Naive thymus-derived CD4-positive, alpha-beta T cell (primary cell): ENCODE measurements at regions of chr1 and their contacts with region 1.

Region 1: DNA sequence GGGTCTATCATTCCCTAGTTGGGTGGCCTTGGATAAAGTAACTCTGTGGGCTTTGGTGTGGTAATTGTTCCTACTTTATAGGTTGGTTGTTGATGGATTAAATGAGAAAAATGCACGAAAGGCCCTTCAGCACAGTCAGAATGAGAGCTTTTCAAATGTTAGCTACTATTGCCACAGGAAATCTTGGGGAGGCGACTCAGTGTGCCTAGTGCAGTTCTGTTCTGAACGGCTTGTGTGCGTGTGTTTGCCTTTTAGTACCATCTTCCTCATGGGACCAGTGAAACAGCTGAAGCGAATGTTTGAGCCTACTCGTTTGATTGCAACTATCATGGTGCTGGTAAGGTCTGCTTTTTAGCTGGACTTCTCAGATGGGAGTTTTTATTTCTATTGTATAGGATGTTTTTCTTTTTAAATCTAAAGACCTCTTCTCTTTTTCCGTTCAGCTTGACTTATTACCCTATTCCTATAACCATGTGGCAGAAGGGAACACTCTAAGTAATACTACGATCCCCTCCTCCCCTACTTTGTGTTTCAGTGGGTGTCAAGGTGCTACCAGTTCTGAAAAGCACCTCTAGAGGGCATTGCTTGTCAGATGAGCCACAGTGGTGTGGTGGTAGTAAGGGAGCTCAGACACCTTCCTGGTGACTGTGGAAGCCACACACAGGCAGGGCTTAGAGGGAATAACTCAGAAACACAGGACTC is 9.2 kb downstream of the SFT2D2 start:
- DNase-seq: peak in 7 of 9 donors; percentile 17 to 38 (median 27)
- ATAC-seq: peak; percentile 95
- H3K4me3 ChIP-seq: no peak overlapping the region
- H3K4me3 Mint-ChIP-seq: peak overlapping the region in 1 of 10 donors; percentile 26
- H3K27ac ChIP-seq: no peak overlapping the region
- H3K27ac Mint-ChIP-seq: peak overlapping the region in 4 of 9 donors; percentile 1 to 68 (median 34)
- H3K4me1 ChIP-seq: peaks cover 9 to 11% of the 10 kb centered on the region in 2 donors
- H3K4me1 Mint-ChIP-seq: peaks cover 33 to 71% (median 61%) of the 10 kb centered on the region in 7 donors
- H3K27me3 ChIP-seq: no peaks in the 10 kb centered on the region
- H3K27me3 Mint-ChIP-seq: no peaks in the 10 kb centered on the region

Region 2: GRCh38 chr1:168287237-168287664 is 52.3 kb after region 1 on chr1:
- CTCF ChIA-PET with region 1: no interaction called
- POLR2A ChIA-PET with region 1: no interaction called
- intact Hi-C with region 1: loop called in 1 of 2 experiments (anchors 5 kb)
- DNase-seq: no peak
- ATAC-seq: peak; percentile 44
- H3K4me3 ChIP-seq: no peak overlapping the region
- H3K4me3 Mint-ChIP-seq: no peak overlapping the region
- H3K27ac ChIP-seq: no peak overlapping the region
- H3K27ac Mint-ChIP-seq: no peak overlapping the region
- H3K4me1 ChIP-seq: no peaks in the 10 kb centered on the region
- H3K4me1 Mint-ChIP-seq: peaks cover 0 to 23% (median 10%) of the 10 kb centered on the region in 7 donors
- H3K27me3 ChIP-seq: no peaks in the 10 kb centered on the region
- H3K27me3 Mint-ChIP-seq: no peaks in the 10 kb centered on the region

Region 3: GRCh38 chr1:168321945-168322344 is 86.9 kb after region 1 on chr1:
- CTCF ChIA-PET with region 1: interaction called, 3 read pairs
- POLR2A ChIA-PET with region 1: no interaction called
- intact Hi-C with region 1: loop called in 1 of 2 experiments (anchors 2 kb)
- DNase-seq: no peak
- ATAC-seq: no peak
- H3K4me3 ChIP-seq: no peak overlapping the region
- H3K4me3 Mint-ChIP-seq: no peak overlapping the region
- H3K27ac ChIP-seq: no peak overlapping the region
- H3K27ac Mint-ChIP-seq: no peak overlapping the region
- H3K4me1 ChIP-seq: peaks cover 0 to 3% of the 10 kb centered on the region in 2 donors
- H3K4me1 Mint-ChIP-seq: peaks cover 0 to 28% (median 0%) of the 10 kb centered on the region in 7 donors
- H3K27me3 ChIP-seq: no peaks in the 10 kb centered on the region
- H3K27me3 Mint-ChIP-seq: no peaks in the 10 kb centered on the region

Region 4: GRCh38 chr1:168360151-168361021 is 125.4 kb after region 1 on chr1:
- CTCF ChIA-PET with region 1: no interaction called
- POLR2A ChIA-PET with region 1: no interaction called
- intact Hi-C with region 1: loop called in 1 of 2 experiments (anchors 5 kb)
- DNase-seq: peak in 1 of 9 donors; percentile 51
- ATAC-seq: no peak
- H3K4me3 ChIP-seq: no peak overlapping the region
- H3K4me3 Mint-ChIP-seq: peak overlapping the region in 1 of 10 donors; percentile 49
- H3K27ac ChIP-seq: no peak overlapping the region
- H3K27ac Mint-ChIP-seq: peak overlapping the region in 2 of 9 donors; percentile 35 to 70
- H3K4me1 ChIP-seq: peaks cover 4 to 37% of the 10 kb centered on the region in 2 donors
- H3K4me1 Mint-ChIP-seq: peaks cover 8 to 45% (median 10%) of the 10 kb centered on the region in 7 donors
- H3K27me3 ChIP-seq: no peaks in the 10 kb centered on the region
- H3K27me3 Mint-ChIP-seq: peaks cover 0 to 12% (median 5%) of the 10 kb centered on the region in 5 donors

Region 5: DNA sequence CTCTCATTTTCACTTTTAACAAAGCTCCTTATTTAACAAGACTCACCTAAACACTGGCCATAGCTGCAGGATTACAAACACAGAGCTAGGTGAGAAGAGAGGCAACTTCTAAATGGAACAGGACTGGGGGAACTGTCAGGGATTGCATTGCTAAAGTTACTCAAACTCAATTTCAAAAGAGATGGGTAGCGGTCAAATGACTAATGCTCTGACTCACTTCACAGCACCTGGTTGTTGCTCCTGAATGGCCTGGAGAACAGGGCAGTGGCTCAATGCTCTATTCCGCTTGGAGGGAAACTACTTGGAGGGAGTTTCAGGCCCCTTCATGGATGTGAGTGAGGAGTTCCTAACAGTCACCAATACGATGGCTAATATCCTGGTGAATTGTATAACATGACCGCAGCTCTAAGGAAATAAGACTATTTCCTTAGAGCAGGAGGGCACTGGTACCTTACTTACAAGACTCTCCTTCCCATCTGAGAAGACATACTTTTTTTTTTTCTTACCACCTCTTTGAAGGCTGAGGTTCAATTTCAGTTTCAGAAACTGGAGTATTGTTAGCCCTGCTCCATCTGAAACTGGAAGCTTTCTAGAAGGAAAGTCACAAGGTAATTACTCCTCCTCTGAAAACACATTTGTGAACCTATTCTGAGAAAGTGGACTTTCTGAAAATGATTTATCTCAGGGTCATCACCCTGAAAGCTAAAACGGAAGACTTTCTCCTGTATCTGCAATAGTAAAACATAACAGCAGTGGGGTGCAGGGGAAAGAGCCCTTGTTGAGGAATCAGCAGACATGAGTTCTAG is 484.5 kb after region 1 on chr1:
- CTCF ChIA-PET with region 1: no interaction called
- POLR2A ChIA-PET with region 1: no interaction called
- intact Hi-C with region 1: no loop called
- DNase-seq: no peak
- ATAC-seq: no peak
- H3K4me3 ChIP-seq: no peak overlapping the region
- H3K4me3 Mint-ChIP-seq: no peak overlapping the region
- H3K27ac ChIP-seq: no peak overlapping the region
- H3K27ac Mint-ChIP-seq: peak overlapping the region in 1 of 9 donors; percentile 13
- H3K4me1 ChIP-seq: no peaks in the 10 kb centered on the region
- H3K4me1 Mint-ChIP-seq: no peaks in the 10 kb centered on the region
- H3K27me3 ChIP-seq: no peaks in the 10 kb centered on the region
- H3K27me3 Mint-ChIP-seq: peaks cover 5 to 23% (median 11%) of the 10 kb centered on the region in 5 donors

Region 6: GRCh38 chr1:169348383-169349036 is 1113.5 kb after region 1 on chr1:
- CTCF ChIA-PET with region 1: no interaction called
- POLR2A ChIA-PET with region 1: interaction called, 3 read pairs
- intact Hi-C with region 1: loop called in 1 of 2 experiments (anchors 1 kb)
- DNase-seq: peak in 7 of 9 donors; percentile 12 to 56 (median 39)
- ATAC-seq: peak; percentile 60
- H3K4me3 ChIP-seq: no peak overlapping the region
- H3K4me3 Mint-ChIP-seq: no peak overlapping the region
- H3K27ac ChIP-seq: no peak overlapping the region
- H3K27ac Mint-ChIP-seq: no peak overlapping the region
- H3K4me1 ChIP-seq: no peaks in the 10 kb centered on the region
- H3K4me1 Mint-ChIP-seq: peaks cover 0 to 18% (median 8%) of the 10 kb centered on the region in 7 donors
- H3K27me3 ChIP-seq: no peaks in the 10 kb centered on the region
- H3K27me3 Mint-ChIP-seq: peaks cover 0 to 3% (median 0%) of the 10 kb centered on the region in 5 donors